ENCODE measurements at regions of chr14 and their contacts with region 1.

Region 1: GRCh38 chr14:55416866-55417265 is 5.2 kb upstream of the ATG14 start:
- H3K4me3 ChIP-seq: no peak overlapping the region
- H3K27ac ChIP-seq: no peak overlapping the region
- H3K4me1 ChIP-seq: 0 out of 2 replicates have a peak, but pooled peaks cover 2% of the 10 kb centered on the region
- CTCF ChIP-seq: no peak

Region 2: DNA sequence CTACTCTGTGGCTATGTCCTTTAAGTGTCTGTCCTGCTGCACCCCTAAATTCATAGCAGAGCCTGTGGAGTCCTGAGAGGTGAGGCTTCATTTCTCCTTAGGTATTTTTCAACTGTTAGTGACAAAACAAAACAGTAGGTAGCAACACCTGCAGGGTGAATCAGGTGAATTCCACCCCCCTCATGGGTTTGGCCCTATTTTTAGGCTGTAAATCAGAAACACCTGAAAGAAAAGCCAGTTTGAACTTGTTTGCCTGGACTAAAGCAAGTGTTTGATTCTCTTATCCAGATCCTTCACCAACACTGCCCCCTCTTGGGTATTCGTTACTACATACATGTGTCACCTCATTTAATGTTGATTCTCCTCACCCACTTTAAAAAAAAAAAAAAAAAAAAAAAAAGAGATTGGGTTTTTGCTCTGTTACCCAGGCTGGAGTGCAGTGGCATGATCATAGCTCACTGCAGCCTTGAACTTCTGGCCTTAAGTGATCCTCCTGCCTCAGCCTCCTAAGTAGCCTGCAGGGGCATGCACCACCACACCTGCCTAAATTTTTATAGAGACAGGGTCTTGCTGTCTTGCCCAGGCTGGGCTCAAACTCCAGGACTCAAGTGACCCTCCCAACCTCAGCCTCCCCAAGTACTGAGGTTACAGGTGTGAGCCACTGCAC is 13.3 kb after region 1 on chr14:
- CTCF ChIA-PET with region 1: interaction called, 50 read pairs
- POLR2A ChIA-PET with region 1: interaction called, 3 read pairs
- H3K4me3 ChIP-seq: no peak overlapping the region
- H3K27ac ChIP-seq: no peak overlapping the region
- H3K4me1 ChIP-seq: no peaks in the 10 kb centered on the region
- CTCF ChIP-seq: no peak

Region 3: DNA sequence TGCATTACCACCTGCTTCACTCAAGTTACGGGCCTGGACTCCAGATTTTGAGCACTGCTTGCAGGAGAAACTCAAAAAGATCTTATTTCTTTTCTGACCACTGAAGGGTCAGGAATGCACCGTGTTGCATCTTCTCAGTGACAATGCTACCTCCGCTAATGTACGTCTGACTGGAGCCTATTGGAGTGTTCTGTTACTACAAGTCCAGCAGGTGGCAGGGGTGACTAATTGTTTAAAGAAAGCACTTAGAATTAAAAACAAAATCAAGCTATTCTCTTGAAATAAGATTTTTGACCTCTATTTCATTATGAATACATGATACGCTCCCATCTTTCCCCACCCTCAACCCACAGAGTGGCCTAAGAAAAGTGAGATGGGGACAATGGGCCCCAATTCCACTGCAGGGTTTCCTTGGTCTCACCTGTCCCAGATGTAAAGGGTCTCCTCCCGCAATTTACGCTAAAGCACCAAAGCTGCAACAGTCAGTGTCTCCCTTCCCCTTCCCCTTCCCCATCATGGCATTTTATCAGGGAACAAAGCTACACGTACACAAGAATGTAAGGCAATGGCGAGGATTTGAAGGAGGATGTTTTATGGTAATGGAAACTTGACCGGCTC is 21.3 kb after region 1 on chr14:
- CTCF ChIA-PET with region 1: interaction called, 13 read pairs
- POLR2A ChIA-PET with region 1: interaction called, 3 read pairs
- H3K4me3 ChIP-seq: no peak overlapping the region
- H3K27ac ChIP-seq: no peak overlapping the region
- H3K4me1 ChIP-seq: no peaks in the 10 kb centered on the region
- CTCF ChIP-seq: no peak

Measured in HEK293 (cell line).